ENCODE measurements at regions of chr9 and their contacts with region 1.

Region 1: GRCh38 chr9:34126207-34127034 is at the start of gene DCAF12:
- DNase-seq: peak; percentile 84
- ATAC-seq: peak; percentile 55
- H3K4me3 ChIP-seq: peak within 1 kb of the TSS; percentile 44 to 67 (median 58)
- H3K4me3 Mint-ChIP-seq: peak within 1 kb of the TSS; percentile 93
- H3K27ac ChIP-seq: no peak within 1 kb of the TSS
- H3K27ac Mint-ChIP-seq: peak within 1 kb of the TSS; percentile 60
- H3K4me1 ChIP-seq: peaks cover 51 to 55% of the 10 kb centered on the region in 2 donors
- H3K4me1 Mint-ChIP-seq: peaks cover 48% of the 10 kb centered on the region
- H3K27me3 ChIP-seq: peaks cover 0 to 81% (median 56%) of the 10 kb centered on the region in 4 experiments
- H3K27me3 Mint-ChIP-seq: peaks cover 50% of the 10 kb centered on the region
- CTCF ChIP-seq: no peak
- total RNA-seq, gene DCAF12: 1.9 and 2.3 TPM in 2 replicates

Region 2: DNA sequence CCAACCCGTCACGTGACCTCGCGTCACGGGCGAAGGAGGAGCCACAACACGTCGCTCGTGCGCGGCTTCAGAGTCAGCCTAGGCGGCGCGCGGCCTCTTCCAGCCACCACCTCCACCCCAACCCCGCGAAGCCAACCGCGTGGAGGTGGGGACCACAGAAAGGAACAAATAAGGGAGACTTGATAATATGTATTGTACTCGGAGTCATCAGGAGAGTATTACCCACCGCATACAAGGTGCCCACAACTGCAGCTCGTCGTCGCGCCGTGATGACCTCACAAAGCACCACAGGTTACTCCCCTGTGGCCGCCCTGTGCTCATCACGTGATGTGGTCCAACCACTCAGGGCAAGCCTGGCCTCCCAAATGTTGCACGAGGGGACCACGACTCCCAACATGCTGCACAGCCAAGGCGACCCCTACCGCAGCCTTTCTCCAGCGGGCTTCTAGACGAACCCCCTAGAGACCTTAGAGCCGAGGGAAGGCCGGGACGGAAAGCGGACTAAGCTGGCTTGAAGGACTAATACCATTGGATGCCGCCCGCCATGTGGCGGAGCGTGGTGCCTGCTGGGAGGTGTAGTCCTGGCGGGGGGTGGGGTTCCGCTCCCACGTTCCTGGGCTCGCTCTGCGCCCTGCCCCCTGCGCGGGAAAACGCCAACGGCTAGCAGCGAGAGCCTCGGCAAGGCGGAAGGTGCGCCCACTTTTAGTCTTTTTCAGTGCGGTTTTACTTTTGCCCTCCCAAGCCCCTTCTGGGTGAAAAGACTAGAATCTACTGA is 77.3 kb before region 1 on chr9:
- CTCF ChIA-PET with region 1: no interaction called
- POLR2A ChIA-PET with region 1: no interaction called
- intact Hi-C with region 1: loop called (anchors 1 kb)
- DNase-seq: peak; percentile 99
- ATAC-seq: peak; percentile 81
- H3K4me3 ChIP-seq: peak overlapping the region; percentile 74 to 95 (median 90)
- H3K4me3 Mint-ChIP-seq: peak overlapping the region; percentile 100
- H3K27ac ChIP-seq: peak overlapping the region; percentile 87 to 91
- H3K27ac Mint-ChIP-seq: peak overlapping the region; percentile 100
- H3K4me1 ChIP-seq: peaks cover 15 to 22% of the 10 kb centered on the region in 2 donors
- H3K4me1 Mint-ChIP-seq: peaks cover 26% of the 10 kb centered on the region
- H3K27me3 ChIP-seq: no peaks in the 10 kb centered on the region
- H3K27me3 Mint-ChIP-seq: no peaks in the 10 kb centered on the region
- CTCF ChIP-seq: no peak

Region 3: DNA sequence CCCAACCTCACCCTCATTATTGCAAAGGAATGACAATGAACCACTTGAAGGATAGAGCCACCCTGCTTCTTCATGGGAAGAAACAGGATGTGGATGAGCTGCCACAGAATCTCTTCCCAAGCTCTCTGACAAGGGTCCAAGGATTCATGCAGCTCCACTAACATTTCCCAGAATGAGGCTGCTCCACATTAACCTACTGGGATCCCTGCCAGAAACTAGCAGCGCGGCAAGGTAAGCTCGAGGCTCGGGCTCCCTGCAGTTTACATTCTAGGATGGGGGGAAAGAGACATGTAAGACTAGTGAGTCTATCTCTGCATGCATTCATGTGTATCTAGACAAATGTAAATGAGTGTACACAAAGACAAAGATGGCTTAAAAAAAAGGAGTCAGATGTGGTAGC is 12.0 kb before region 1 on chr9:
- CTCF ChIA-PET with region 1: no interaction called
- POLR2A ChIA-PET with region 1: no interaction called
- intact Hi-C with region 1: no loop called
- DNase-seq: no peak
- ATAC-seq: no peak
- H3K4me3 ChIP-seq: no peak overlapping the region
- H3K4me3 Mint-ChIP-seq: no peak overlapping the region
- H3K27ac ChIP-seq: no peak overlapping the region
- H3K27ac Mint-ChIP-seq: no peak overlapping the region
- H3K4me1 ChIP-seq: no peaks in the 10 kb centered on the region
- H3K4me1 Mint-ChIP-seq: no peaks in the 10 kb centered on the region
- H3K27me3 ChIP-seq: peaks cover 0 to 82% (median 42%) of the 10 kb centered on the region in 4 experiments
- H3K27me3 Mint-ChIP-seq: peaks cover 53% of the 10 kb centered on the region
- CTCF ChIP-seq: no peak

Region 4: DNA sequence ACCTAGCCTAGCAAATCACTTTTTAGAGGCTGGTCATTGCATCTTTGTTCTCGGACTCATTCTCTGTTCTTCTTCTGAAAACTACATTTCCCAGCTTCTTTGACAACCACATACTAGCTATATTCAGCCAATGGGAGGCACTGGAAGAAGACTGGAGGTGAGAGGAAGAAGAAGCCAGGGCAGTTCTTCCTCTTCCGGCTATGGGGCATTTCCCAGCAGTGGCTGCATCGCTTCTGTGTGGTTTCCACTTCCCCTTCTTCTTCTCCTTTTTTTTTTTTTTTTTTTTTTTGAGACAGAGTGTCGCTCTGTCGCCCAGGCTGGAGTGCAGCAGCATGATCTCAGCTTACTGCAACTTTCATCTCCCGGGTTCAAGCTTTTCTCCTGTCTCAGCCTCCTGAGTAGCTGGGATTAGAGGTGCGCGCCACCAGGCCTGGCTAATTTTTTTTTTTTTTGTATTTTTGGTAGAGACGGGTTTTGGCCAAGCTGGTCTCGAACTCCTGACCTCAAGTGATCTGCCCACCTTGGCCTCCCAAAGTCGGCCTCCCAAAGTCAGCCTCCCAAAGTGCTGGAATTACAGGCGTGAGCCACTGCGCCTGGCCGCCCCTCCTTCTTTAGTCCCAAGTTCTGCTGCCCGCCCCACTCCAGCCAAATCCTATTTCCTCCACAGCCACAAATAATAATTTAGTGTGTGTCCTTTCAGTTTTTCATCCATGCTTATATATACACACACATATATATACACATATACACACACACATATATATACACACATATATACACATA is 45.5 kb after region 1 on chr9:
- CTCF ChIA-PET with region 1: no interaction called
- POLR2A ChIA-PET with region 1: no interaction called
- intact Hi-C with region 1: loop called (anchors 2 kb)
- DNase-seq: peak; percentile 86
- ATAC-seq: peak; percentile 99
- H3K4me3 ChIP-seq: peak overlapping the region in 1 of 5 experiments; percentile 10
- H3K4me3 Mint-ChIP-seq: peak overlapping the region; percentile 43
- H3K27ac ChIP-seq: no peak overlapping the region
- H3K27ac Mint-ChIP-seq: peak overlapping the region; percentile 12
- H3K4me1 ChIP-seq: peaks cover 10 to 13% of the 10 kb centered on the region in 2 donors
- H3K4me1 Mint-ChIP-seq: peaks cover 5% of the 10 kb centered on the region
- H3K27me3 ChIP-seq: peaks cover 0 to 31% (median 2%) of the 10 kb centered on the region in 4 experiments
- H3K27me3 Mint-ChIP-seq: no peaks in the 10 kb centered on the region
- CTCF ChIP-seq: no peak

Region 5: DNA sequence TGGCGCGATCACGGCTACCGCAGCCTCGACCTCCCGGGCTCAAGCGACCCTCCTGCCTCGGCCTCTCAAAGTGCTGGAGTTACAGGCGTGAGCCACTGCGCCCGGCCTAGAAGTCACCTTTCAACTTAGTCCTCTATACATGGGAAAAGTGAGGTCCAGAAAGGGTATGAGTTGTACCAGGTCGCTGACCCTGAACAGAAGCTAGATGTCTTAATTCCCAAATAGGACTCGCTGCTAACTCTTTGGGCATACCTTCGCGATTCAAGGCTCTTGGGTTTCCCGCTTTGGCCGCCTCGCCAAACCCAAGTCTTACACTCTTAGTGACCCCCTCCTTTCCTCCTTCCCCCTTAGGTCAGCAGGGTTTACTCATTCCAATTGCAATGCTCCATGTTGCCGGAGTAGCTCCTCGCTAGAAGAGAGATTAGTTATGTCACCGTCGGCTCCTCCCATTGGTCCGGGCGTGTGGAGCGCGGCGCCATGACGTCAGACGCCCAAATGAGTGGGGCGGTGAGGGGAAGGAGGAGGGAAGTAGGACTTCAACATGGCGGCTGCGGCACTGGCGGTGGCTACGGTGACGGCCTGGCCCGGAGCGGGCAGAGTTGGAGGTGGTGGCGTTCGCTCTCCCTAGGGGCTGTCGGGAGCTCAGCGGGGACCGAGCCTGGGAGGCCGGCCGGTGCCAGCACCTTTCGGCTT is 52.2 kb after region 1 on chr9 and contains the start of gene UBAP1:
- CTCF ChIA-PET with region 1: no interaction called
- POLR2A ChIA-PET with region 1: interaction called, 3 read pairs
- intact Hi-C with region 1: loop called (anchors 2 kb)
- DNase-seq: peak; percentile 95
- ATAC-seq: peak; percentile 99
- H3K4me3 ChIP-seq: peak within 1 kb of the TSS; percentile 68 to 94 (median 75)
- H3K4me3 Mint-ChIP-seq: peak within 1 kb of the TSS; percentile 92
- H3K27ac ChIP-seq: peak within 1 kb of the TSS; percentile 84 to 88
- H3K27ac Mint-ChIP-seq: peak within 1 kb of the TSS; percentile 93
- H3K4me1 ChIP-seq: peaks cover 8 to 21% of the 10 kb centered on the region in 2 donors
- H3K4me1 Mint-ChIP-seq: peaks cover 18% of the 10 kb centered on the region
- H3K27me3 ChIP-seq: peaks cover 0 to 17% (median 2%) of the 10 kb centered on the region in 4 experiments
- H3K27me3 Mint-ChIP-seq: no peaks in the 10 kb centered on the region
- CTCF ChIP-seq: no peak
- total RNA-seq, gene UBAP1: 27.0 and 29.3 TPM in 2 replicates

Region 6: DNA sequence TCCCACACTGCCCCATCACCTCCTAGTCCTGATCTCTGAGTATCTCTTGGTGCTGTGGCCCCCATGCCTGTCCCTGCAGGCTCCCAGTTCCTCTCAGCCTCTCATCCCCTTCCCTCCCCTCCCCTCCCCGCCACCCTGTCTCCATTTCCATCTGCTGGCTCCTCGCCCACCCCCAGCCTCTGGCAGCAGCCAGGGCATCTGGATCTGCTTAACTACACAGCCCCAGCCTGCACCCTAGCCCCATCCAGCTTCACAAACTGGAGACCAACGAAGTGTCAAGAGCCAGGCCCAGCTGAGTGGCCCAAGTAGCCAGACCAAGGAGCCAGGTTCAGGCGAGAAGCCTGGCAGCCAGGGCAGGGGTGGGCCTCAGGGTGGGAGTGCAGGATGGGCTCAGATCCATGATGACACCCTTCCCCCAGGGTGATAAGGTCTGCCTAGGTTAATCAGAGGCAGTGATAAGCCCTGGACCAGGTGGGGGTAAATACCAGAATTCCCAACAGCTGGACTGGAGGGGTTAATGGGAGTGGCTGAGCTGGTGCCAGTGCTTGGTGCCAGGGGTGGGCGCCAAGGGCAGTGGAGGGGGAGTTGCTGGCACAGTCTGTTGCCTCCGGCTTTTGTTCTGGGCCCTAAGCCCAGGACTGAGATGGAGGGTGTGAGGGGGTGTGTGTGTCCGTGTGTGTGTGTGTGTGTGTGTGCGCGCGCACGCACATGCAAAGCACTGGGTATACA is 528.1 kb after region 1 on chr9:
- CTCF ChIA-PET with region 1: no interaction called
- POLR2A ChIA-PET with region 1: no interaction called
- intact Hi-C with region 1: no loop called
- DNase-seq: no peak
- ATAC-seq: no peak
- H3K4me3 ChIP-seq: no peak overlapping the region
- H3K4me3 Mint-ChIP-seq: no peak overlapping the region
- H3K27ac ChIP-seq: no peak overlapping the region
- H3K27ac Mint-ChIP-seq: no peak overlapping the region
- H3K4me1 ChIP-seq: no peaks in the 10 kb centered on the region
- H3K4me1 Mint-ChIP-seq: peaks cover 11% of the 10 kb centered on the region
- H3K27me3 ChIP-seq: no peaks in the 10 kb centered on the region
- H3K27me3 Mint-ChIP-seq: peaks cover 3% of the 10 kb centered on the region
- CTCF ChIP-seq: no peak